Motor neuron (in vitro differentiated cells): ENCODE measurements at regions of chr4 and their contacts with region 1.

Region 1: DNA sequence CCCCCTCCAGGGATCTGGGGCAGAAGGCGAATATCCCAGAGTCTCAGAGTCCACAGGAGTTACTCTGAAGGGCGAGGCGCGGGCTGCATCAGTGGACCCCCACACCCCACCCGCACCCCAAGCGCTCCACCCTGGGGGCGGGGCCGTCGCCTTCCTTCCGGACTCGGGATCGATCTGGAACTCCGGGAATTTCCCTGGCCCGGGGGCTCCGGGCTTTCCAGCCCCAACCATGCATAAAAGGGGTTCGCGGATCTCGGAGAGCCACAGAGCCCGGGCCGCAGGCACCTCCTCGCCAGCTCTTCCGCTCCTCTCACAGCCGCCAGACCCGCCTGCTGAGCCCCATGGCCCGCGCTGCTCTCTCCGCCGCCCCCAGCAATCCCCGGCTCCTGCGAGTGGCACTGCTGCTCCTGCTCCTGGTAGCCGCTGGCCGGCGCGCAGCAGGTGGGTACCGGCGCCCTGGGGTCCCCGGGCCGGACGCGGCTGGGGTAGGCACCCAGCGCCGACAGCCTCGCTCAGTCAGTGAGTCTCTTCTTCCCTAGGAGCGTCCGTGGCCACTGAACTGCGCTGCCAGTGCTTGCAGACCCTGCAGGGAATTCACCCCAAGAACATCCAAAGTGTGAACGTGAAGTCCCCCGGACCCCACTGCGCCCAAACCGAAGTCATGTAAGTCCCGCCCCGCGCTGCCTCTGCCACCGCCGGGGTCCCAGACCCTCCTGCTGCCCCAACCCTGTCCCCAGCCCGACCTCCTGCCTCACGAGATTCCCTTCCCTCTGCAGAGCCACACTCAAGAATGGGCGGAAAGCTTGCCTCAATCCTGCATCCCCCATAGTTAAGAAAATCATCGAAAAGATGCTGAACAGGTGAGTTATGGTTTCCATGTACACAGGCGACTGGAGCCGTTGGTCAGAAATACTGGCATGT is at the start of gene CXCL1:
- ATAC-seq: peak; percentile 66 to 92 (median 88)
- H3K4me3 ChIP-seq: peak within 1 kb of the TSS; percentile 26 to 49 (median 37)
- H3K27ac ChIP-seq: no peak within 1 kb of the TSS
- H3K4me1 ChIP-seq: no peaks in the 10 kb centered on the region
- total RNA-seq, gene CXCL1: 0.18 to 50.5 (median 2.5) TPM in 7 of 8 experiments, not detected in the other

Region 2: DNA sequence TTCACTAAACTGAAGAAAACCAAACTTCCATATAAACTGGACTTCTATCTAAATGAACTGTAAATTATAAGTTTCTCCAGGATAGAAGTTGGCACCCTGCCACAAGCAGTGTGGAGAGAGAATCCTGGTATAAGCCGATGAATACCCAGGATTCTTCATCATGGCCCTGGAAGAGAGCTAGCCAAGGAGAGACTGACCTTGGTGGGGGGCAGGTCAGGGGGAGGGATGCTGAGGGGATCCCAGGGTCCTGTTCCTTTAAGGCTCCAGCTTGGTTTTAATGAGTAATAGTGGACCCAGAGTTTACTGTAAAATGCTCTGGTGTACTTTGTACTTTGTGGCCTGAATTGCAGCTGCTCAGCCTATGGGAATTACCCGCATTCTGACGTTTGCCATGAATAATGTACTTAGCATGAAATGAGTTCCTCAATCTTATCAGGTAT is 266.1 kb before region 1 on chr4:
- in situ Hi-C with region 1: no loop called
- ATAC-seq: peak in 3 of 8 experiments; percentile 30 to 45 (median 38)
- H3K4me3 ChIP-seq: no peak overlapping the region
- H3K27ac ChIP-seq: no peak overlapping the region
- H3K4me1 ChIP-seq: no peaks in the 10 kb centered on the region

Region 3: DNA sequence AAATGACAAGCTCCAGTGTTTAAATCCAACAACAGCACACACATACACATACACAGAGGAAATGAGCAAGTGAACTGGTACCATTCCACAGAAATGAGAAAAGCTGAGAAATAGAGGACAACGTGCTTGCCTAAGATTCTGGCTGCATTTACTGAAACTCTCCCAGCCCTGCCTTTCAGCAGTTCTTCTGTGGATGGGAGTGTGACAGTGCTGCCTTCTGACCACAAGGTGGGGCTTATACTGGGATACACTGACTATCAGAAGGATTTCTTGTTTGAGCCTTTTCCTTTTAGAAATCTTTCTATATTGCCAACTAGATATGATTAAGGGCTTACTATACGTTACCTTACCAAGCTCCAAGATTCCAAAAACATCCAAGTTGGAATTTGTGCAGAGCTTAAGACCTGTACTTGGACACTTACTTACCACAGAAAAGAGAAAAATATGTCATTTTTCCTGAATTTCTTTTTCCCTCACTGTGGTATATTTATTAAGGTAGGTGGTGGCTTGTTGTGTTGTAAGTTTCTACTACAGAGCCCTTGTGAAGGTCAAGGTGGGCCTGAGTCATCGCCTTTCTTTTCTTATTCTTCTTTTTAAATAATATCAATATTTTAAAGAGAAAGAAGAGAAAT is 139.7 kb before region 1 on chr4:
- in situ Hi-C with region 1: loop called in 1 of 9 experiments (anchors 25 kb)
- ATAC-seq: peak; percentile 60 to 89 (median 78)
- H3K4me3 ChIP-seq: no peak overlapping the region
- H3K27ac ChIP-seq: no peak overlapping the region
- H3K4me1 ChIP-seq: no peaks in the 10 kb centered on the region